ENCODE measurements at regions of chr19 and their contacts with region 1.

Region 1: DNA sequence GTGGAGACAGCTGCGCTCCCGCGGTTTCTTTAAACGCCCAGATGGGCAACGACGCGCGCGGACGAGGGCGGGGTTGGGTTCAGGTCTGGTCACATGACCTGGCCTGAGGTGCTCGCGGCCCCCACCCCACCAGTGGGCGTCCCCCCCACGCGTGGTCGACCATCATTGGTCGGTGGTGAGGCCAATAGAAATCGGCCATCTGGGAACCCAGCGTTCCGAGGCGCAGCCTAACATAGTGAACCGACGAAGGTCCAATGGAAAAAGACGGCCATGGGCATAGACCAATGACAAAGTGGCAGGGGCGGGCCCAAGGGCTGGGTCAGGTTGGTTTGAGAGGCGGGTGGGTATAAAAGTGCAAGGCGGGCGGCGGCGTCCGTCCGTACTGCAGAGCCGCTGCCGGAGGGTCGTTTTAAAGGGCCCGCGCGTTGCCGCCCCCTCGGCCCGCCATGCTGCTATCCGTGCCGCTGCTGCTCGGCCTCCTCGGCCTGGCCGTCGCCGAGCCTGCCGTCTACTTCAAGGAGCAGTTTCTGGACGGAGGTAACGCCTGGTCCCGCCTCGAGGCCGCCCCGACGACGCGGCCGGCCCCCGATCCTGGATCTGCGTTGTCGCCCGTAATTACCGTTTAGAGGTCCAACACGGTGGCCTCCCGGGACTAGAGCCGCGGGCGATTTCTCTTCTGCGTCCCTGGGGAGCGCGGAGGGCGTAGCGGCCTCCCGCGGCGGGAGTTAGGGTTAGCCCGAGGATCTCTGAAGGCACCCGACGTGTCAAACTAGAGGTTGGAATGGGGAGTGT is at the start of gene CALR:
- DNase-seq: peak; percentile 98 to 100 (median 99)
- ATAC-seq: peak; percentile 88
- H3K4me3 ChIP-seq: peak within 1 kb of the TSS; percentile 71 to 91
- H3K4me3 Mint-ChIP-seq: peak within 1 kb of the TSS; percentile 99
- H3K27ac ChIP-seq: peak within 1 kb of the TSS; percentile 86
- H3K27ac Mint-ChIP-seq: peak within 1 kb of the TSS; percentile 96
- H3K4me1 ChIP-seq: peaks cover 41% of the 10 kb centered on the region
- H3K4me1 Mint-ChIP-seq: peaks cover 58% of the 10 kb centered on the region
- H3K27me3 ChIP-seq: no peaks in the 10 kb centered on the region
- H3K27me3 Mint-ChIP-seq: no peaks in the 10 kb centered on the region
- CTCF ChIP-seq: no peak
- total RNA-seq, gene CALR: 618 to 650 TPM

Region 2: GRCh38 chr19:12666265-12667048 is 272.0 kb before region 1 on chr19 and contains the starts of genes MAN2B1 and WDR83:
- CTCF ChIA-PET with region 1: no interaction called
- POLR2A ChIA-PET with region 1: interaction called, 3 read pairs
- intact Hi-C with region 1: loop called in 1 of 2 experiments (anchors 5 kb)
- DNase-seq: peak; percentile 57 to 92 (median 77)
- ATAC-seq: peak; percentile 72
- H3K4me3 ChIP-seq: peak within 1 kb of the TSS; percentile 82 to 84
- H3K4me3 Mint-ChIP-seq: peak within 1 kb of the TSS; percentile 90
- H3K27ac ChIP-seq: peak within 1 kb of the TSS; percentile 69 to 99
- H3K27ac Mint-ChIP-seq: peak within 1 kb of the TSS; percentile 94
- H3K4me1 ChIP-seq: peaks cover 46% of the 10 kb centered on the region
- H3K4me1 Mint-ChIP-seq: peaks cover 54% of the 10 kb centered on the region
- H3K27me3 ChIP-seq: no peaks in the 10 kb centered on the region
- H3K27me3 Mint-ChIP-seq: no peaks in the 10 kb centered on the region
- CTCF ChIP-seq: no peak
- total RNA-seq, gene MAN2B1: 74.8 to 82.2 TPM
- total RNA-seq, gene WDR83: 7.4 to 10.0 TPM

Region 3: GRCh38 chr19:12806239-12807081 is 132.0 kb before region 1 on chr19 and contains the start of gene RNASEH2A:
- CTCF ChIA-PET with region 1: no interaction called
- POLR2A ChIA-PET with region 1: no interaction called
- intact Hi-C with region 1: loop called in 1 of 2 experiments (anchors 10 kb)
- DNase-seq: peak; percentile 66 to 93 (median 85)
- ATAC-seq: peak; percentile 92
- H3K4me3 ChIP-seq: peak within 1 kb of the TSS; percentile 60 to 68
- H3K4me3 Mint-ChIP-seq: peak within 1 kb of the TSS; percentile 92
- H3K27ac ChIP-seq: peak within 1 kb of the TSS; percentile 54 to 63
- H3K27ac Mint-ChIP-seq: peak within 1 kb of the TSS; percentile 78
- H3K4me1 ChIP-seq: peaks cover 18% of the 10 kb centered on the region
- H3K4me1 Mint-ChIP-seq: peaks cover 26% of the 10 kb centered on the region
- H3K27me3 ChIP-seq: no peaks in the 10 kb centered on the region
- H3K27me3 Mint-ChIP-seq: no peaks in the 10 kb centered on the region
- CTCF ChIP-seq: no peak
- total RNA-seq, gene RNASEH2A: 1.3 to 2.2 TPM

Region 4: DNA sequence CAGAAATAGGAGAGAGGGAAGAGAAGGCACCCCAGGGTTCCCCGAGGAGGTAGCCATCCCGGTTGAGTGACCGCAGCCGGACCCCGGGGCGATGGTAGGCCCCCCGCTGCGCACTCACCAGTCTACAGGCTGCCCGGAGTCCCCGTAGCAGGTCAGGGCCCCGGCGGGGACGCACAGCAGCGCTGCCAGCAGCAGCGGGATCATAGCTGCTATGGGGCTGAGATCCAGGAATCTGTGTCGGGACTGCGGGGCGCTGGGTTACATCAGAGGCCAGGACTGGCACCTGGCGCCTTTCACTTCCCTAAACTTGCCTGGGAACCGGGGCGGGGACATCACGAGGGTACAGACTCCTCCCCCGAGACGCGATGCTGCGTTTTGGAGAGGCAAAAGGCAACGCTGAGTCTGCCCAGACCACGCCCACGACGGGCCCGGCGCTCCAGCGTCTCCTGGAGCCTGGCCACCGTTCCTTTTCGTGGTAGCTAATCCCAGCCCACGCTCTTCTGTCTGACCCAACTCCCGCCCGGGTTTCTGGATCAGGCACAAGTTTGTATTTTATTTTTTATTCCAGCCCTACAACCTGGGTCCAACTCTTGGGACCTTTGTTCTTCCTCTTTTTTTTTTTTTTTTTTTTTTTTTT is 57.1 kb before region 1 on chr19 and contains the start of gene DNASE2:
- CTCF ChIA-PET with region 1: interaction called, 13 read pairs
- POLR2A ChIA-PET with region 1: interaction called, 8 read pairs
- intact Hi-C with region 1: loop called in 1 of 2 experiments (anchors 1 kb)
- DNase-seq: peak; percentile 72 to 94 (median 88)
- ATAC-seq: peak; percentile 75
- H3K4me3 ChIP-seq: peak within 1 kb of the TSS; percentile 80 to 89
- H3K4me3 Mint-ChIP-seq: peak within 1 kb of the TSS; percentile 84
- H3K27ac ChIP-seq: peak within 1 kb of the TSS; percentile 73 to 82
- H3K27ac Mint-ChIP-seq: peak within 1 kb of the TSS; percentile 80
- H3K4me1 ChIP-seq: peaks cover 29% of the 10 kb centered on the region
- H3K4me1 Mint-ChIP-seq: peaks cover 28% of the 10 kb centered on the region
- H3K27me3 ChIP-seq: no peaks in the 10 kb centered on the region
- H3K27me3 Mint-ChIP-seq: no peaks in the 10 kb centered on the region
- CTCF ChIP-seq: no peak
- total RNA-seq, gene DNASE2: 5.9 to 8.4 TPM

Region 5: GRCh38 chr19:12890787-12891552 is 47.5 kb before region 1 on chr19 and contains the start of gene GCDH:
- CTCF ChIA-PET with region 1: interaction called, 13 read pairs
- POLR2A ChIA-PET with region 1: interaction called, 13 read pairs
- intact Hi-C with region 1: loop called (anchors 1 kb)
- DNase-seq: peak; percentile 92 to 99 (median 95)
- ATAC-seq: peak; percentile 87
- H3K4me3 ChIP-seq: peak within 1 kb of the TSS; percentile 87 to 92
- H3K4me3 Mint-ChIP-seq: peak within 1 kb of the TSS; percentile 99
- H3K27ac ChIP-seq: peak within 1 kb of the TSS; percentile 77 to 79
- H3K27ac Mint-ChIP-seq: peak within 1 kb of the TSS; percentile 98
- H3K4me1 ChIP-seq: peaks cover 23% of the 10 kb centered on the region
- H3K4me1 Mint-ChIP-seq: peaks cover 29% of the 10 kb centered on the region
- H3K27me3 ChIP-seq: no peaks in the 10 kb centered on the region
- H3K27me3 Mint-ChIP-seq: no peaks in the 10 kb centered on the region
- CTCF ChIP-seq: no peak
- total RNA-seq, gene GCDH: 36.0 to 41.7 TPM

Region 6: GRCh38 chr19:12924616-12925276 is 13.7 kb before region 1 on chr19:
- CTCF ChIA-PET with region 1: no interaction called
- POLR2A ChIA-PET with region 1: interaction called, 11 read pairs
- intact Hi-C with region 1: loop called (anchors 1 kb)
- DNase-seq: peak in 1 of 9 experiments; percentile 7
- ATAC-seq: no peak
- H3K4me3 ChIP-seq: no peak overlapping the region
- H3K4me3 Mint-ChIP-seq: no peak overlapping the region
- H3K27ac ChIP-seq: no peak overlapping the region
- H3K27ac Mint-ChIP-seq: no peak overlapping the region
- H3K4me1 ChIP-seq: no peaks in the 10 kb centered on the region
- H3K4me1 Mint-ChIP-seq: peaks cover 2% of the 10 kb centered on the region
- H3K27me3 ChIP-seq: no peaks in the 10 kb centered on the region
- H3K27me3 Mint-ChIP-seq: no peaks in the 10 kb centered on the region
- CTCF ChIP-seq: no peak

Region 7: GRCh38 chr19:12956446-12957388 is 18.3 kb after region 1 on chr19 and contains the start of gene GADD45GIP1:
- CTCF ChIA-PET with region 1: no interaction called
- POLR2A ChIA-PET with region 1: interaction called, 4 read pairs
- intact Hi-C with region 1: loop called in 1 of 2 experiments (anchors 2 kb)
- DNase-seq: peak; percentile 68 to 88 (median 77)
- ATAC-seq: peak; percentile 99
- H3K4me3 ChIP-seq: peak within 1 kb of the TSS; percentile 84 to 86
- H3K4me3 Mint-ChIP-seq: peak within 1 kb of the TSS; percentile 83
- H3K27ac ChIP-seq: peak within 1 kb of the TSS; percentile 70 to 78
- H3K27ac Mint-ChIP-seq: peak within 1 kb of the TSS; percentile 91
- H3K4me1 ChIP-seq: peaks cover 13% of the 10 kb centered on the region
- H3K4me1 Mint-ChIP-seq: peaks cover 29% of the 10 kb centered on the region
- H3K27me3 ChIP-seq: no peaks in the 10 kb centered on the region
- H3K27me3 Mint-ChIP-seq: no peaks in the 10 kb centered on the region
- CTCF ChIP-seq: no peak
- total RNA-seq, gene GADD45GIP1: 13.2 to 14.4 TPM

Region 8: GRCh38 chr19:13022859-13023636 is 84.6 kb after region 1 on chr19:
- CTCF ChIA-PET with region 1: no interaction called
- POLR2A ChIA-PET with region 1: no interaction called
- intact Hi-C with region 1: no loop called
- DNase-seq: peak in 2 of 9 experiments; percentile 11 to 30
- ATAC-seq: no peak
- H3K4me3 ChIP-seq: peak overlapping the region in 1 of 2 experiments; percentile 31
- H3K4me3 Mint-ChIP-seq: peak overlapping the region; percentile 65
- H3K27ac ChIP-seq: no peak overlapping the region
- H3K27ac Mint-ChIP-seq: no peak overlapping the region
- H3K4me1 ChIP-seq: peaks cover 16% of the 10 kb centered on the region
- H3K4me1 Mint-ChIP-seq: peaks cover 18% of the 10 kb centered on the region
- H3K27me3 ChIP-seq: peaks cover 3 to 21% of the 10 kb centered on the region in 2 experiments
- H3K27me3 Mint-ChIP-seq: peaks cover 36% of the 10 kb centered on the region
- CTCF ChIP-seq: no peak

Measured in CD8-positive, alpha-beta T cell (primary cell).